ENCODE measurements at regions of chr12 and their contacts with region 1.

Region 1: DNA sequence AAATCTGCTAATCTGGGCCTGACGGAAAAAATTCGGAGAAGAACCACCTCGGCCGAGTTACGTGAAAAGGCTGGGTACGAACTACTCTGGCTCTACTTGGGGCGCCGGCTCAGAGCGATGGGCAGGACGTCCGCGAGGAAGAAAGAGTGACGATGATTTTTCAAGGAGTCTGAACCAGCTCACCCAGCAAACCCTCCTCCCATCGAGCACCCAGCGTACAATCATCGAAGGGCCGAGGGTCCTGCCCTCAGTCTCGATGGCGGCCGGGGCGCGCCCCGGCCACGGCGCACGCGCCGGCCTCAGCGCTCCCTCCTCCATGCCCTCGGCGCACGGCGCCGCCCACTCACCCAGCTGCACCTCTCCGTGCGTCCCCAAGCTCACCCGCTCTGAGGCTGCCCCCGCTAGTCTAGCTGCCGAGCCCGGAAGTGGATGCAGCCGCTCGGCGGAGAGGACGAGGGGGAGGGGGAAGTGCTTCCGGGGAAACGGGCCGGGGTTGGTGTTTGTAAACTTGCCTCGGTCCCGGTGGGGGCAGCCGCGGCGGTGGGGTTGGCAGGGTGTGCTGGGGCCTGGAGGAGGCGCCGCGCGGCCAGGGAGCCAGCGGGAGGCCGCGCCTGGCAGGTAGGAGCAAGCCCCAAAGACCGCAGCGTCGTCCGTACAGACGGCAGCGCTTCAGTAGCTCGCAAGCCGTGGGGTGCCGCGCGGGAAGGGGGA is at the starts of genes CSAD and ZNF740:
- DNase-seq: peak; percentile 98
- ATAC-seq: peak; percentile 92 to 95
- H3K4me3 ChIP-seq: peak within 1 kb of the TSS; percentile 63 to 95 (median 69)
- H3K27ac ChIP-seq: peak within 1 kb of the TSS; percentile 85 to 97 (median 91)
- H3K4me1 ChIP-seq: peaks cover 37% of the 10 kb centered on the region in 2 donors
- H3K27me3 ChIP-seq: no peaks in the 10 kb centered on the region
- CTCF ChIP-seq: no peak
- POLR2A ChIP-seq: peak; percentile 71 to 79
- total RNA-seq, gene CSAD: 0.68 to 14.9 (median 1.9) TPM
- total RNA-seq, gene ZNF740: 4.1 to 7.4 (median 5.0) TPM

Region 2: GRCh38 chr12:53005986-53006809 is 174.2 kb before region 1 on chr12 and contains the start of gene EIF4B:
- in situ Hi-C with region 1: no loop called
- intact Hi-C with region 1: loop called (anchors 1 kb)
- DNase-seq: peak; percentile 100
- ATAC-seq: peak; percentile 92 to 93
- H3K4me3 ChIP-seq: peak within 1 kb of the TSS; percentile 86 to 97 (median 94)
- H3K27ac ChIP-seq: peak within 1 kb of the TSS; percentile 95 to 98 (median 96)
- H3K4me1 ChIP-seq: peaks cover 45 to 46% of the 10 kb centered on the region in 2 donors
- H3K27me3 ChIP-seq: no peaks in the 10 kb centered on the region
- CTCF ChIP-seq: peak in 2 of 5 experiments; percentile 33 to 42
- POLR2A ChIP-seq: peak; percentile 87 to 88
- total RNA-seq, gene EIF4B: 667 to 821 (median 740) TPM

Region 3: DNA sequence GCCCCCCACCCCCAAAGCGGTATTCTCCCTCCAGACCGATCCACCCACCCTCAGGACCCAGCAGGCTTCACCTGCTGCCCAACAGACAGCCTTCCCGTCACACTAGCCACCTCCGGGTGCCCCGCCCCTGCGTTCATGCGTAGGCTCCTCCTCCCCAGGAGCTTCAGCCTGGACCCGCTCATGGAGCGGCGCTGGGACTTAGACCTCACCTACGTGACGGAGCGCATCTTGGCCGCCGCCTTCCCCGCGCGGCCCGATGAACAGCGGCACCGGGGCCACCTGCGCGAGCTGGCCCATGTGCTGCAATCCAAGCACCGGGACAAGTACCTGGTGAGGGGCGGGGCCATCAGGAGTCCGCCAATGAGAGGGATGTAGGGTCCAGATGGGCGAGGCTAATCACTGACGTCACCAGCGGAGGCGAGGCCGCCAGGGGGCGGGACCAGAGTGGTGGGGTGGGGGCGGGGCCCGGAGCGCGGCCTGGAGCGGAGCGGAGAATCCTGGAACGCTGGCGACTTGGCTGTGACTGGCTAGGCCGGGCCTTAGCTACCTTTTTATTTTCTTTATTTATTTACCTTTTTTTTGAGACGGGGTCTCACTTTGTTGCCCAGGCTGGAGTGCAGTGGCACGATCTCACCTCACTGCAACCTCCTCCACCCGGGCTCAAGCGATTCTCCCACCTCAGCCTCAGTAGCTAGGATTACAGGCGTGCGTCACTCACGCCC is 126.1 kb before region 1 on chr12:
- in situ Hi-C with region 1: loop called in 1 of 4 experiments (anchors 25 kb)
- intact Hi-C with region 1: no loop called
- DNase-seq: peak; percentile 94 to 97
- ATAC-seq: peak; percentile 51 to 54
- H3K4me3 ChIP-seq: peak overlapping the region; percentile 83 to 97 (median 95)
- H3K27ac ChIP-seq: peak overlapping the region; percentile 99 to 100 (median 100)
- H3K4me1 ChIP-seq: peaks cover 38 to 49% of the 10 kb centered on the region in 2 donors
- H3K27me3 ChIP-seq: no peaks in the 10 kb centered on the region
- CTCF ChIP-seq: no peak
- POLR2A ChIP-seq: peak; percentile 89 to 91

Region 4: DNA sequence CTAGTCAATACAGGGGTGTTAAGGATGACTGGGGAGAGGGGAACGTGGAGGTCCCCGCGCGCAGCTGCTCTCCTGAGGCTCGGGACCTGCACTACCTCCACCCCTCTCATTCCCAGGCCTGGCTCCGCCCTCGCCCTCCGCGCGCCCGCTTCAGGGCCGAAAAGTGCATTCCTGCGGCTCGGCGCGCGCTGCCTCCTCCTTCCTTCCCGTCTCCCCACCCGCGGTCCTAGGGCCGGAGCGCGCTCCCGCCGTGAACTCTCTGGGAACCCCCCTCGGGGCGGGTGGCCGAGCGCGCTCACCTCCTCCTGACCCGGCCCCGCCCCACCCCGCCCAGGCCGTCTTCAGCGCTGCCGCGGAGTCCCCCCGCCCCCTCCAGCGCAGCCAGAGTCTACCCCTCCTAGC is 40.4 kb after region 1 on chr12:
- in situ Hi-C with region 1: no loop called
- intact Hi-C with region 1: loop called (anchors 1 kb)
- DNase-seq: peak; percentile 80 to 81
- ATAC-seq: peak; percentile 81 to 83
- H3K4me3 ChIP-seq: peak overlapping the region; percentile 74 to 83 (median 75)
- H3K27ac ChIP-seq: peak overlapping the region; percentile 98 to 100 (median 98)
- H3K4me1 ChIP-seq: peaks cover 37 to 60% of the 10 kb centered on the region in 2 donors
- H3K27me3 ChIP-seq: no peaks in the 10 kb centered on the region
- CTCF ChIP-seq: no peak
- POLR2A ChIP-seq: no peak